WTC11 (cell line): ENCODE measurements at regions of chr13 and their contacts with region 1.

Region 1: DNA sequence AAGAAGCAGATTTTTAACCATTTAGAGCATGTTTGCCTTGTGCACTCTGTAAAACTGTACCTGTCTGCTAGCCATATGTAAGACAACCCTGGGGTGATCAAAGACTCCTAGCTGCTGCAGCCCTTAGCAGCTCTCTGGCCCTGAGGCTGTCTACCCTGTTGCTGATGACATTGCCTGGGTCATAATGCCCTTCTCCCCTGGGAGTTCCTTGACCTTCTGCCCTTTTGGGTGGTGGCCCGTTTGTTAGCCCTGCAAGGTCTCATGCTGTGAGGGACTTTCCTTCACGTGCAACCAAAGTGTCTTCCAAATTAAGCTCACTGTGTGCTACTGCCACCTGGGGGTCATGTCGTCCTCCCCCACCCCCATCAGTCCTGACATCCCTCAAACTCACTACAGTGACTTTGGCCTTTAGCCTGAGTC is 7.4 kb downstream of the GPC6 start:
- DNase-seq: peak; percentile 68
- ATAC-seq: peak; percentile 90
- H3K4me3 Mint-ChIP-seq: peak overlapping the region; percentile 28; the same call in 1 of the 2 replicates
- H3K27ac Mint-ChIP-seq: no peak overlapping the region
- H3K4me1 Mint-ChIP-seq: peaks cover 58% of the 10 kb centered on the region
- H3K27me3 Mint-ChIP-seq: no peaks in the 10 kb centered on the region
- CTCF ChIP-seq: peak; percentile 17; the same call in 1 of the 2 replicates

Region 2: DNA sequence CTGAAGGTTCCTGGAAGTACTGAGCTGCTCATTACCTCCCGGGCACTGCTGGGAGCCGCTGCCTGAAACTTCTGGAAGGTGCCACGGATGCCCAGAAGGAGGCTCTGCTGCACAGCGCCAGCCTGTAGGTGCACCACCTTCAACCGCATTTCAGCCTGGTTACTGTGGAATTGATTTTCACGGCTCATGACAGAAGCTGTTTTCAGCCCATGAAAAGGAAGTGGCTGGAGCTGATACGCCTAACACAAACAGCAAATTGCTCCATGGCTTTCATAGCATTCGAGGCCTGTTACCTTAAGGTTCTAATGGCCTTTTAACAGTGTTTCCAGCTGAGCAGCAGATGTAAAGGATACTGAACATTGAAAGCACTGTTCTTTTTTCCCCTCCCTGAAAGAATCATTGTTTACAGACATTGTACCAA is 14.6 kb after region 1 on chr13:
- CTCF ChIA-PET with region 1: interaction called, 15 read pairs
- POLR2A ChIA-PET with region 1: no interaction called
- DNase-seq: peak; percentile 61
- ATAC-seq: peak; percentile 78
- H3K4me3 Mint-ChIP-seq: no peak overlapping the region
- H3K27ac Mint-ChIP-seq: peak overlapping the region; percentile 76; the same call in 1 of the 2 replicates
- H3K4me1 Mint-ChIP-seq: peaks cover 74% of the 10 kb centered on the region
- H3K27me3 Mint-ChIP-seq: no peaks in the 10 kb centered on the region
- CTCF ChIP-seq: no peak